Natural killer cell (primary cell): ENCODE measurements at regions of chr4 and their contacts with region 1.

Region 1: DNA sequence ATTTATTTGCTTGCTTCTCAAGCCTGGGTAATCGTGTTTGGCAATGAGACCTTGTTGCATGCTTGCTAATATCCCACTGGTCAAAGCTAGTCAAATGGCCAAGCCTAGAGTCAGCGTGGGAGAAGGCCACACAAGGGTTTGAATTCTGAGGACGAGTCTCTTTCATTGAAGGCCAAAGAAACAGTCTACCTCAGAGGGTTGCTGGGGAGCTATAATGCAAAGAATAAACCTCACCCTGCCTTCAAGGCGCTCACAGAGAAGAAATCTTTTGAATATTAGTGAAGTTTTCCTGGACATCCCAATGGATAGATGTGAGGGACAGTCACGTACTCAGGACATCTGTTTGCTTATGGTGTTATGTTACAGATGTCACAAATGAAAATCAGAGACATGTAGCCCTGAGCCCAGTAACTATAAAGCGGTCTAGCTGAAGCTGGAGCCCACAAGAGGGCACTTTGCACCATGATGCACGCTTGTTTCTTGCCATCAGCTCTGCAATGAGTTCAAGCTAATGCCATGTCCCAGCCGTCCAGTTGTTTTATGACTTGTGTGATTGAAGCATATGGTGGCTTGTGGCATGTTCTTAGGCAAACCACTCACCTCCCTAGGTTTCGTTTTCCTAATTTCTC is 1.1 kb upstream of the TLR3 start:
- DNase-seq: peak; percentile 25 to 60
- ATAC-seq: peak; percentile 75 to 89 (median 86)
- H3K4me3 ChIP-seq: peak overlapping the region; percentile 42
- H3K4me3 Mint-ChIP-seq: peak overlapping the region; percentile 83
- H3K27ac ChIP-seq: no peak overlapping the region
- H3K27ac Mint-ChIP-seq: peak overlapping the region; percentile 73 to 77
- H3K4me1 ChIP-seq: peaks cover 13% of the 10 kb centered on the region
- H3K4me1 Mint-ChIP-seq: peaks cover 37 to 40% of the 10 kb centered on the region in 2 donors
- H3K27me3 ChIP-seq: no peaks in the 10 kb centered on the region
- H3K27me3 Mint-ChIP-seq: no peaks in the 10 kb centered on the region
- CTCF ChIP-seq: no peak

Region 2: DNA sequence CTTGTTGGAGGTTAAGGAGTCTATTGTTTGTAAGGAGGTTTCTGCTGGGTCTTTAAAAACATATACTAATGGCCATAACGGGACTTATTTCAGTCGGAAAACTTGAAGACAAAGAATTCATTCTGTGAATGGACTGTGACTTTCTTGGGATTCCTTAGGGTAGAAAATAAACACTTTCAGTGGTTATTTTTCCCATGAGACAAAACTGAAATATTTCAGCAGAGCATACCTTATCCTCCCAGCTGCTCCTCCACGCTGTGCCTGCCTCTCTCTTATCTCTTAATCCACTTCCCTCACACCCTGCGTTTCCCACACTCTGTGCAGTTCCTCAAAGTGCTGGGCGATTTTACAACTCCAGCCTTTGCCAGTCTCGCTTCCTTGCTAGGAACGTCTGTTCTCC is 208.8 kb before region 1 on chr4:
- intact Hi-C with region 1: no loop called
- DNase-seq: no peak
- ATAC-seq: no peak
- H3K4me3 ChIP-seq: no peak overlapping the region
- H3K4me3 Mint-ChIP-seq: no peak overlapping the region
- H3K27ac ChIP-seq: no peak overlapping the region
- H3K27ac Mint-ChIP-seq: no peak overlapping the region
- H3K4me1 ChIP-seq: no peaks in the 10 kb centered on the region
- H3K4me1 Mint-ChIP-seq: no peaks in the 10 kb centered on the region
- H3K27me3 ChIP-seq: no peaks in the 10 kb centered on the region
- H3K27me3 Mint-ChIP-seq: peaks cover 3 to 4% of the 10 kb centered on the region in 2 donors
- CTCF ChIP-seq: no peak

Region 3: GRCh38 chr4:186121057-186121456 is 53.2 kb after region 1 on chr4:
- intact Hi-C with region 1: no loop called
- DNase-seq: no peak
- ATAC-seq: no peak
- H3K4me3 ChIP-seq: no peak overlapping the region
- H3K4me3 Mint-ChIP-seq: no peak overlapping the region
- H3K27ac ChIP-seq: no peak overlapping the region
- H3K27ac Mint-ChIP-seq: no peak overlapping the region
- H3K4me1 ChIP-seq: no peaks in the 10 kb centered on the region
- H3K4me1 Mint-ChIP-seq: no peaks in the 10 kb centered on the region
- H3K27me3 ChIP-seq: no peaks in the 10 kb centered on the region
- H3K27me3 Mint-ChIP-seq: peaks cover 12 to 19% of the 10 kb centered on the region in 2 donors
- CTCF ChIP-seq: no peak

Region 4: DNA sequence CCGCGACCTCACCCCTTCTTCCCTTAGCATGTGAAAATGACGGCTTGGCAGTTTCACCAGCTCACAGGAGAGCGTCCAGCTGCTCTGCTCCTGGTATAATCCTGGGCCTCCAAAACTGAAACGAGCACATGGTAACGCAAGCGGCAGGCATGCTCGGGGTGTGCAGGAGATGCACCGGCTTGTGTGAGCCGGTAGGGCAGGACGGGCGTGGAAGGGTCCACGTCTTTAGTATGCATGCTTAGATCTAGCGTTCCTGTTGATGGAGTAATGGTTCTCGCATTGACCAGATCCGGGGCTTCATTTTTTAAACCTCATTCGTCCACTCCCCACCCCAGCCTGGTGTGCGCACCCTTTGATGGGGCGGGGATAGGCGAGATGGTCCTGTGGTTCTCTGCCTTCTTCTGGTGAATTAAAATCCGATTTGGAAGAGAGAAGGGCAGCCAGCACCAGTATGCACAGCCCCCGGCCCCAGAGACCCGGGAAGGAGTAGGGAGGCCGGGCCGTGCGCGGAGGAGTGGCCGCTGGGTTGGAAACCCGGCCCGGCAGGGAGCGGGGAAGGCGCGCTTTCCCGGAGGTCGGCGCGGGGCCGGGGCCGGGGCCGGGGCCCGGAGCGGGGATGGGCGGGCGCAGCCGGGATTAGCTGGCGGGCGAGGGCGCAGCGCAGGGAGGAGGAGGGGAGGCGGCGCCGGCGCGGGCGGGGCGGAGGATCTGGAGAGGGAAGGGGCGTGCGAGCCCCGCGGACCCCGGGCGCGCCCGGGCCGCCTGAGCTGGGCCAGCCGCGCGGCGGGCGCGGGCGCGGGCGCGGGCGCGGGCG is 76.5 kb after region 1 on chr4:
- intact Hi-C with region 1: no loop called
- DNase-seq: no peak
- ATAC-seq: peak in 1 of 3 donors; percentile 48
- H3K4me3 ChIP-seq: no peak overlapping the region
- H3K4me3 Mint-ChIP-seq: peak overlapping the region; percentile 65
- H3K27ac ChIP-seq: no peak overlapping the region
- H3K27ac Mint-ChIP-seq: no peak overlapping the region
- H3K4me1 ChIP-seq: no peaks in the 10 kb centered on the region
- H3K4me1 Mint-ChIP-seq: peaks cover 0 to 6% of the 10 kb centered on the region in 2 donors
- H3K27me3 ChIP-seq: peaks cover 17% of the 10 kb centered on the region
- H3K27me3 Mint-ChIP-seq: peaks cover 29 to 40% of the 10 kb centered on the region in 2 donors
- CTCF ChIP-seq: no peak

Region 5: DNA sequence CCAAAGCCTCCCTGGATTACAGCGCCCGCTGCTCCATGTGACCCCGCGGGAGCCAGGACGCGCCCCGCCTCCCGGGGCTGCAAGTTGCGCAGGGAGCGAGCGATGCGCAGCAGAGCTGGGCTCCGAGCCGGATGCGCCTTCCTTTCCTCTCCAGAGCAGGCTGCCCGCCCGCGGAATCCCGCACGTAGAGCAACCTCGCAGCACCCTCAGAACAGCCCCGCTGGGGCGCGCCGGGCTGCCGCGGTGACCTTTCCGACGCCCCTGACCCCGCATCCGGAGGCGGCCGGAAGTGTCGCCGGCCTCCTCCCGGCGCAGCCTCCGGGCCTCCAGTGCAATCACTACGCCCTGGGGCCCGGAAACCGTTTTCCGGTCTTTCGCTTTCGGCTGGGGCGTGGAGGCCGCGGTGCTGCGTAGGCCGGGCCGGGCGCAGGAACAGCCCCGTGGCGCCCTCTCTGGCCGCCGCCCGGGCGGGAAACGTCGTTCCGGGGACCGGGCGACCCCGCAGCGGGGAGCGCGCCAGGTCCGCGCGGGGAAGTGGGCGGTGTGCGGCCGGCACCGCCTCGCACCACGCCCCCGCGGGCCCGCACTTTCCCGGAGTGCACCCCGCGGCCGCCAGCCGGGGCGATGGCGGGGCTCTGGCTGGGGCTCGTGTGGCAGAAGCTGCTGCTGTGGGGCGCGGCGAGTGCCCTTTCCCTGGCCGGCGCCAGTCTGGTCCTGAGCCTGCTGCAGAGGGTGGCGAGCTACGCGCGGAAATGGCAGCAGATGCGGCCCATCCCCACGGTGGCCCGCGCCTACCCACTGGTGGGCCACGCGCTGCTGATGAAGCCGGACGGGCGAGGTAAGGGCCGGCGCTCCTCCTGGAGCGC is 123.6 kb after region 1 on chr4 and contains the start of gene CYP4V2:
- intact Hi-C with region 1: loop called (anchors 5 kb)
- DNase-seq: peak; percentile 81 to 90
- ATAC-seq: peak; percentile 86 to 94 (median 90)
- H3K4me3 ChIP-seq: peak within 1 kb of the TSS; percentile 97
- H3K4me3 Mint-ChIP-seq: peak within 1 kb of the TSS; percentile 97
- H3K27ac ChIP-seq: peak within 1 kb of the TSS; percentile 95
- H3K27ac Mint-ChIP-seq: peak within 1 kb of the TSS; percentile 92 to 93
- H3K4me1 ChIP-seq: peaks cover 17% of the 10 kb centered on the region
- H3K4me1 Mint-ChIP-seq: peaks cover 40% of the 10 kb centered on the region in 2 donors
- H3K27me3 ChIP-seq: no peaks in the 10 kb centered on the region
- H3K27me3 Mint-ChIP-seq: no peaks in the 10 kb centered on the region
- CTCF ChIP-seq: peak; percentile 27
- total RNA-seq, gene CYP4V2: 27.9 to 32.5 (median 31.7) TPM

Region 6: DNA sequence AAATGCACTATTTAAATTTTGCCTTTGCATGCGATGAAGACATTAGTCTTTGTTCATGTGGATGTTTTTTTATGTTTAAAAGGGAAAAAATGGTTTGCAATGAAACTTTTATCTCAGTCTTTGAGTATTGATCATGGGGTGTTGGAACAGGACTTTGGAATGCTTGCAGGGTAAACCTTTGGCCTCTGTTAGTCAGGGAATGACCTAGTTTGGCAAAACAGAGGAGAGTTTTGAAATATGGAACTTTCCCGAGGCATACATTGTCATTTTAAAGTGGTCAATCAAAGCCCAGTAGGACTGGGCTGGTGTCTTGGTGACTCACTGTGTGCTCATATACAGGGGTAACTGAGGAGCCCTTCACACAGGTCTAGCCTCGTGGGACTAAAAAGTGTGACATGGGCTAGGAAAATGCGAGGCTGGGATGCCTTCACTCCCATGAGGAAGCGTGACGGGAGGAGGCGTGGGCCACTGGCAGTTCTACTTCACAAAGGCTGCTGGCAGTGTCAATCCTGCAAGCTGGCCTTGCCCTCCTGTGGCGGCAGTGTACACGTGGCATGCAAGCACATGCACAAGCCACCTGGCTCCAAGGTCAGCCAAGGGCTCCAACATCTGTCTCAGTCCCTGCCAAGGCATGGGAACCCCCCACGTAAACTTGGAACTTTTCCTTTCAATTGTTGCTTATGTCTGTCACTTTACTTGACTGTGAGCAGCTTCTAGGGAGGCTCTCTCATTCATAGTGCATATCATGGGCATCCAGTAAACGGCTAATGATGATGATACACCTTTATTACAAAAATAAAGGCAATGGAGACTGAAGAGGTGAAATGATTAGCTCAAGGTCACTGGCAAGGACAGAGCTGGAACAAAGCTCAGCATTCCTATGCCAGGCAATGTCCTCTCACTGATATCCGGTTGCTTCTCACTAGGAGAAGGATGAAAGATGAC is 192.9 kb after region 1 on chr4:
- intact Hi-C with region 1: no loop called
- DNase-seq: no peak
- ATAC-seq: no peak
- H3K4me3 ChIP-seq: no peak overlapping the region
- H3K4me3 Mint-ChIP-seq: no peak overlapping the region
- H3K27ac ChIP-seq: no peak overlapping the region
- H3K27ac Mint-ChIP-seq: no peak overlapping the region
- H3K4me1 ChIP-seq: no peaks in the 10 kb centered on the region
- H3K4me1 Mint-ChIP-seq: no peaks in the 10 kb centered on the region
- H3K27me3 ChIP-seq: no peaks in the 10 kb centered on the region
- H3K27me3 Mint-ChIP-seq: peaks cover 4 to 10% of the 10 kb centered on the region in 2 donors
- CTCF ChIP-seq: no peak